Activated CD4-positive, alpha-beta memory T cell treated with anti-CD3 and anti-CD28 coated beads for 36 hours (primary cell): ENCODE measurements at regions of chrX and their contacts with region 1.

Region 1: GRCh38 chrX:103585411-103586313 is at the start of gene TCEAL4:
- DNase-seq: peak; percentile 47
- H3K4me3 Mint-ChIP-seq: peak within 1 kb of the TSS; percentile 82
- H3K27ac Mint-ChIP-seq: no peak within 1 kb of the TSS
- H3K4me1 Mint-ChIP-seq: peaks cover 9% of the 10 kb centered on the region
- H3K27me3 Mint-ChIP-seq: peaks cover under 1% of the 10 kb centered on the region
- total RNA-seq, gene TCEAL4: 12.4 to 13.3 TPM

Region 2: DNA sequence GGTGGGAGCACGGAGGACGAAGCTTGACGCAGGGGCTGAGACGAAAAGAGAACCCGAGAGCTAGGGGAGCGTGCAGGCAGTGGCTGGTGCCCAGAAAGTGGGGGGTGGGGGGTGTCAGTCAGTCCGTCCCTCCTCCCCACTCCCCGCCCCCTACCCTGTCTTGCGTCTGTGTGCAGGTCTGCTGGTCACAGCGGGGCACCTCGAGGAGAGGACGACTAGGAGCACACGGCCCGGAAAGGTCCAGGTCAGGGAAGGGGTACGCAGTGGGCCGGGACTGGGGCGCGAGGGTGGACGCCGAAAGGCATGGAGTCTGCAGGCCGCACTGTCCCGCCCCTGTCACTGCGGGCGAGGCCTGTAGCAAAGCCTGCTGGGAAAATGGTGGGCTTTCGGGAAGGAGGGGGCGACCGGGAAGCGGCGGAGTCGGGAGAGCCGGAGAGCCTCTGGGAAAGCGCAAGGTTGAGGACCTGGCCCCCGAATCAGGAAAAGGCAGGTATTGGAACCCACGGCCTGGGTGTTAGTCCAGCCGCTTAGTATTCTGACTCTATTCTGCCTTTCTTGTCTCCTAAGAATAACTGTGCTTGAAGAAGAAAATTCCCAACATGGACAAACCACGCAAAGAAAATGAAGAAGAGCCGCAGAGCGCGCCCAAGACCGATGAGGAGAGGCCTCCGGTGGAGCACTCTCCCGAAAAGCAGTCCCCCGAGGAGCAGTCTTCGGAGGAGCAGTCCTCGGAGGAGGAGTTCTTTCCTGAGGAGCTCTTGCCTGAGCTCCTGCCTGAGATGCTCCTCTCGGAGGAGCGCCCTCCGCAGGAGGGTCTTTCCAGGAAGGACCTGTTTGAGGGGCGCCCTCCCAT is 43.9 kb after region 1 on chrX:
- CTCF ChIA-PET with region 1: no interaction called
- POLR2A ChIA-PET with region 1: no interaction called
- intact Hi-C with region 1: loop called (anchors 5 kb)
- DNase-seq: peak; percentile 42
- H3K4me3 Mint-ChIP-seq: peak overlapping the region; percentile 84
- H3K27ac Mint-ChIP-seq: peak overlapping the region; percentile 70
- H3K4me1 Mint-ChIP-seq: peaks cover 17% of the 10 kb centered on the region
- H3K27me3 Mint-ChIP-seq: no peaks in the 10 kb centered on the region